Psoas muscle (tissue), 8 donors: ENCODE measurements at regions of chr7 and their contacts with region 1.

Region 1: GRCh38 chr7:3080106-3080505 is 36.4 kb upstream of the CARD11 start:
- DNase-seq: no peak
- ATAC-seq: no peak
- H3K4me3 ChIP-seq: no peak overlapping the region
- H3K27ac ChIP-seq: no peak overlapping the region
- H3K4me1 ChIP-seq: no peaks in the 10 kb centered on the region
- H3K27me3 ChIP-seq: peaks cover 0 to 2% (median 0%) of the 10 kb centered on the region in 3 donors
- CTCF ChIP-seq: no peak

Region 2: DNA sequence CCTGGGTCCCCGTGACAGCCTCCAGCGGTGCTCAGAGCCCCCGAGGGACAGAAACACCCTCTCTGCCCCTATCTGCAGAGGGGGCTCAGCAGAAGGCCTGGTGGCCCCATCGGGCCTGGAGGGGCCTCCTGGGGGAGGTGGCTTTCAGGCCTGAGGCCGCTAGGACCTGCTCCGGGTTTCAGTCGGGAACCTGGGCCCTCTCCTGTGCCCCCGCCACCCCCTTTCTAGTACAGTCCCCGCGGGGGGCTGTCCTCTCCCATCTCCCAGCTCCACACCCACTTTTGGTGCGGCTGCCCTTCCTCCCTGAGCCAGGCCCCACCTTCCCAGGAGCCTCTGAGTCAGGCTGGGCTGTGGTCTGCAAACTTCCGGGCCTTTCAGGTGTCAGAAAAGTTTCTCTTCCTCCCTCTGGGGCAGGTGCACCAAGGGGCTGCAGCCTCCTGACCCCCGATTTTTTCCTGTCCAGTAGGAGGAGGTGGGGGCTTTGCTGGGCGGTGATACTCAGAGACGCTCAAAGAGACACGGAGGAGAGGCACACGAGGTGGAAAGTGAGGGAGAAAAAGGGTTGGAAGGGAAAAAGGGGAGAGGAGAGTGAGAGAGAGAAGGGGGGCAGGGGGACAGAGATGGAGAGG is 37.1 kb before region 1 on chr7:
- intact Hi-C with region 1: no loop called
- DNase-seq: no peak
- ATAC-seq: no peak
- H3K4me3 ChIP-seq: no peak overlapping the region
- H3K27ac ChIP-seq: no peak overlapping the region
- H3K4me1 ChIP-seq: no peaks in the 10 kb centered on the region
- H3K27me3 ChIP-seq: peaks cover 0 to 19% (median 6%) of the 10 kb centered on the region in 3 donors
- CTCF ChIP-seq: no peak

Region 3: GRCh38 chr7:3103614-3104398 is 23.7 kb after region 1 on chr7:
- intact Hi-C with region 1: loop called in 1 of 2 experiments (anchors 2 kb)
- DNase-seq: no peak
- ATAC-seq: no peak
- H3K4me3 ChIP-seq: no peak overlapping the region
- H3K27ac ChIP-seq: no peak overlapping the region
- H3K4me1 ChIP-seq: no peaks in the 10 kb centered on the region
- H3K27me3 ChIP-seq: peaks cover 0 to 3% (median 0%) of the 10 kb centered on the region in 3 donors
- CTCF ChIP-seq: no peak